Cardiac septum (tissue), 1 donor: ENCODE measurements at regions of chr10 and their contacts with region 1.

Region 1: GRCh38 chr10:132023092-132023811 is 41.5 kb upstream of the BNIP3 start:
- DNase-seq: peak; percentile 91

Region 2: GRCh38 chr10:131885391-131886161 is 137.7 kb before region 1 on chr10:
- intact Hi-C with region 1: loop called (anchors 1 kb)
- DNase-seq: peak; percentile 88

Region 3: GRCh38 chr10:131900350-131901146 is 122.7 kb before region 1 on chr10 and contains the start of gene PPP2R2D:
- intact Hi-C with region 1: loop called (anchors 5 kb)
- DNase-seq: peak; percentile 97
- total RNA-seq, gene PPP2R2D: 35.3 TPM

Region 4: DNA sequence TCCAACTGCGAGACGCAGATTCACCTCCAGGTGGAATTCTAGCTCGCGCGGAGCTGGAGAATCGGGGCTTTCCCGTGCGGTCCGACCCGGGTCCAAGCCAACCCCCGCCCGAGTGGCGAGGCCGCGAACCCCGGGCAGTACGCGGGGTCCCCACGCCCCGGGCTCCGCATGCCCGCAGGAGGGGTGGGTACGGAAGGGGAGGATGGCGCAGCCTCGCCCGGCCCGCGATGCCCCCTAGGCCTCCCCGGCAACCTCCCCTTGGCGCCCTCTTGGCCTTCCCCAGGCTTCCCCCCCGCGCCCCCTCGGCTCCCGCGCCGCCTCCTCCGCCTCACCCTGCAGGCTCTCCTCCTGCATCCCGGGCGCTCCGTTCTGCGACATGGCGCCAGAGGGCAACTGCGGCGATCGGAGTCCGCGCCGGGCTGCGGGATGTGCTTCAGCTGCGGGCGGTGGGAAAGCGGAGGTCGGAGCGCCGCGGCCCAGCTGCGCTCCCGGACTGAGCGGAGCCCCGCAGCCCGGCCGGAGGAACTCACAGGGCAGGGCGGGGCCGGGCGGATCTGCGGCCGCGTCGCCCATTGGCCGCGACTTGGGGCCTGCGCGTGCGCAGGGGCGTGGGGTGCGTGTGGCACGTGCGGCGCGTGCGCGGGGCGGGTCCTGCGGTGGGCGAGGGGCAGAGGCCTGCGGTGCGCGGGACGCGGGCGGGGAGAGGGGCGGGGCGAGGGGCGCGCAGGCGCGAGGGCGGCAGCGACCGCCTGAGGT is 41.6 kb before region 1 on chr10 and contains the start of gene BNIP3:
- intact Hi-C with region 1: loop called (anchors 5 kb)
- DNase-seq: peak; percentile 95
- total RNA-seq, gene BNIP3: 112 TPM

Region 5: GRCh38 chr10:132142411-132143161 is 119.3 kb after region 1 on chr10:
- intact Hi-C with region 1: loop called (anchors 5 kb)
- DNase-seq: peak; percentile 74